PC-3 (cell line): ENCODE measurements at regions of chr1 and their contacts with region 1.

Region 1: DNA sequence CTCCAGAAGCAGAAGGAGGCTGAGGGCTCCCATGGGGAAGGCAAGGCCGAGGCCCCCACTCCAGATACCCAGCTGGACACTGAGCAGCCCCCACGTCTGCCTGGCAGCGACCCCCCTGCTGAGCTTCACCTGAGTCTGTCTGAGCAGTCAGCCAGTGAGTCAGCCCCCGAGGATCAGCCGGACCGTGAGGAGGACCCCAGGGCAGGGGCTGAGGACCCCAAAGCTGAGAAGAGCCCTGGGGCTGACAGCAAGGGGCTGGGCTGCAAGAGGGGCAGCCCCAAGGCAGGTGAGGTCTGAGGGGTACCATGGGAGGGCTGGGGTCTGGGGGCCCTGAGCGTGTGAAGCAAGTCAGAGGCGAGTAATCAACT is 21.3 kb downstream of the DMBX1 start:
- DNase-seq: no peak
- ATAC-seq: no peak
- H3K4me3 ChIP-seq: no peak overlapping the region
- H3K27ac ChIP-seq: no peak overlapping the region
- H3K4me1 ChIP-seq: no peaks in the 10 kb centered on the region; the same call in 1 of the 2 replicates
- H3K27me3 ChIP-seq: no peaks in the 10 kb centered on the region
- CTCF ChIP-seq: no peak

Region 2: DNA sequence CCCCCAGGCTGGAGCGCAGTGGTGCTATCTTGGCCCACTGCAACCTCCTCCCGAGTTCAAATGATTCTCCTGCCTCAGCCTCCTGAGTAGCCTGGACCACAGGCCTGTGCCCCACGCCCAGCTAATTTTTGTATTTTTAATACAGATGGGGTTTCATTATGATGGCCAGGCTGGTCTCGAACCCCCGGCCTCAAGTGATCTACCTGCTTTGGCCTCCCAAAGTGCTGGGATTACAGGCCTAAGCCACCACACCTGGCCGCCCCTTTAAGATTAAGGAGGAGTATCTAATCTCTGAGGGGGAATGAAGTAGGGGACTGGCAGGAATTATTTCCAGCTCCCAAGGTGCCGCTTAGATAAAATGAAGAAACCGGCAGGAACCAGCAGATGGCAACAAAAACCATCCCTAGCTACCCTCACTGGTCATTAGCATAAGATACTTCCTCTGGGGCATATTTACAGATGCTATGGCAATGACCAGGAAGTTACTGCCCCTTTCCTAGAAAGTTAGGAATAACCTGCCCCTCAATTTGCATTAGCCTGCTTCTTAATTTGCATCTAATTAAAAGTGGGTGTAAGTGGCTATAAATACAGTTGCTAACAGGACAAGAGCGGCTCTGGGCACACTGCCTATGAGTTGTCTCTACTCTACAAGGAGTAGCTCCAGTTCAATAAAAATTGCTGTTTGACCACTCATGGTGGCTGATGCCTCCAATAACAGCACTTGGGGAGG is 177.5 kb before region 1 on chr1:
- CTCF ChIA-PET with region 1: no interaction called
- POLR2A ChIA-PET with region 1: no interaction called
- intact Hi-C with region 1: no loop called
- DNase-seq: peak; percentile 60
- ATAC-seq: peak; percentile 88
- H3K4me3 ChIP-seq: no peak overlapping the region
- H3K27ac ChIP-seq: no peak overlapping the region
- H3K4me1 ChIP-seq: no peaks in the 10 kb centered on the region
- H3K27me3 ChIP-seq: no peaks in the 10 kb centered on the region
- CTCF ChIP-seq: peak; percentile 64

Region 3: DNA sequence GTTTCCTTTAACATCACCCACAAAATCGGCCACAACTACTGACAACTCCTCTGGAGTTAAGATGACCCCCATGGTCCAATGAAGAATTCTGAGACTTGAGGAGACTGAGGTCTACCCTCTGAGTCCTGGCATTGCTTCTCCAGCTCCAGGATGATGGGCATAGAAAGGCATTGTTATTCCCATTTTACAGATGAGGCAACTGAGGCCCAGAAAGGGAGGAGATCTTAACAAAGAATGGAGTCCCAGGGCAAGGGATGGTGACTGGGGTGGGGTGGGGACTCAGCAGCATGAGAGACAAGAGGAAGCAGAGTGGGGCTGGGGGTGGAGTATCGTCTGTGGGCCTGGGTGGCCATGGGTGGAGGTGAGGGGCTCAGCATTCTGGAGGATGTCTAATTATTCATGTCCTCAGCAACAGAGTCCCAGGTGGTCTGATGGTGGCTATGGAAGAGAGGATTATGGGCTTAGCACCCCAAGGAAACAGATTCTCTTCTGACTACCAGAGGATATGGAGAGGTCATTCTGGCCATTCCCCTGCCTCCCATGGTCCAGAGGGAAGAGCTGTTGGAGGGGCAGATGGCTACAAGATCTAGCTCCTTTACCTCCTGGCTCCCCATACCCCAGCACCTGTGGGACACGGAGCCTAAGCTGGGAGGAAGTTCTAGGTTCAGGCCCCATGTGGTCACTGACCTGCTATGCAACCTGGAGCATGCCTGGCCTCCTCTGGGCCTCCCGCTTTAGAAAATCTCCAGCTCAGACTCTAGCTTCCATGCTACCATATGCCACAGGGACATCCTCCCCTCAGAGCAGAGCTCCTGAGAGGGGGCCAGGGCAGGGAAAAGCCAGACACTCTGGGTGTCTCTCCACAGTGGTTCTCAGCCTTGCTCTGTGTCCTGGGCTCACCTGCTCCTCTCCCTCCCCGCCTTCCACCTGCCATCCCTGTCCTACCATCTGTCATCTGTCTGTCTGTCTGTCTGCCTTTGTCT is 58.7 kb before region 1 on chr1:
- CTCF ChIA-PET with region 1: no interaction called
- POLR2A ChIA-PET with region 1: interaction called, 14 read pairs
- intact Hi-C with region 1: no loop called
- DNase-seq: no peak
- ATAC-seq: no peak
- H3K4me3 ChIP-seq: no peak overlapping the region
- H3K27ac ChIP-seq: no peak overlapping the region
- H3K4me1 ChIP-seq: no peaks in the 10 kb centered on the region
- H3K27me3 ChIP-seq: no peaks in the 10 kb centered on the region
- CTCF ChIP-seq: no peak